ENCODE measurements at regions of chr16 and their contacts with region 1.

Region 1: GRCh38 chr16:27639561-27640276 is 89.8 kb downstream of the KATNIP start:
- DNase-seq: no peak
- H3K4me3 ChIP-seq: no peak overlapping the region
- H3K27ac ChIP-seq: no peak overlapping the region
- H3K4me1 ChIP-seq: no peaks in the 10 kb centered on the region
- H3K27me3 ChIP-seq: no peaks in the 10 kb centered on the region
- CTCF ChIP-seq: peak in 1 of 3 donors; percentile 14
- POLR2A ChIP-seq: no peak

Region 2: GRCh38 chr16:28309811-28310311 is 670.1 kb after region 1 on chr16:
- intact Hi-C with region 1: loop called (anchors 5 kb)
- DNase-seq: no peak
- H3K4me3 ChIP-seq: no peak overlapping the region
- H3K27ac ChIP-seq: no peak overlapping the region
- H3K4me1 ChIP-seq: no peaks in the 10 kb centered on the region
- H3K27me3 ChIP-seq: no peaks in the 10 kb centered on the region
- CTCF ChIP-seq: no peak
- POLR2A ChIP-seq: no peak

Measured in breast epithelium (tissue), 4 donors.